ENCODE measurements at regions of chr15 and their contacts with region 1.

Region 1: GRCh38 chr15:65391732-65392131 is 13.9 kb upstream of the IGDCC3 start:
- DNase-seq: no peak
- ATAC-seq: no peak
- H3K4me3 Mint-ChIP-seq: no peak overlapping the region
- H3K27ac Mint-ChIP-seq: no peak overlapping the region
- H3K4me1 Mint-ChIP-seq: peaks cover 4% of the 10 kb centered on the region
- H3K27me3 Mint-ChIP-seq: peaks cover 40% of the 10 kb centered on the region

Region 2: GRCh38 chr15:65318870-65319356 is 72.8 kb before region 1 on chr15:
- CTCF ChIA-PET with region 1: interaction called, 161 read pairs
- DNase-seq: peak; percentile 84
- ATAC-seq: peak; percentile 96
- H3K4me3 Mint-ChIP-seq: no peak overlapping the region
- H3K27ac Mint-ChIP-seq: no peak overlapping the region
- H3K4me1 Mint-ChIP-seq: no peaks in the 10 kb centered on the region
- H3K27me3 Mint-ChIP-seq: peaks cover 20% of the 10 kb centered on the region

Measured in activated CD8-positive, alpha-beta memory T cell treated with anti-CD3 and anti-CD28 coated beads, Interleukin-2, amount 10 ng/mL, durations not matched to agents 7 days and 5 days (primary cell).